GM12878 (cell line): ENCODE measurements at regions of chr9 and their contacts with region 1.

Region 1: DNA sequence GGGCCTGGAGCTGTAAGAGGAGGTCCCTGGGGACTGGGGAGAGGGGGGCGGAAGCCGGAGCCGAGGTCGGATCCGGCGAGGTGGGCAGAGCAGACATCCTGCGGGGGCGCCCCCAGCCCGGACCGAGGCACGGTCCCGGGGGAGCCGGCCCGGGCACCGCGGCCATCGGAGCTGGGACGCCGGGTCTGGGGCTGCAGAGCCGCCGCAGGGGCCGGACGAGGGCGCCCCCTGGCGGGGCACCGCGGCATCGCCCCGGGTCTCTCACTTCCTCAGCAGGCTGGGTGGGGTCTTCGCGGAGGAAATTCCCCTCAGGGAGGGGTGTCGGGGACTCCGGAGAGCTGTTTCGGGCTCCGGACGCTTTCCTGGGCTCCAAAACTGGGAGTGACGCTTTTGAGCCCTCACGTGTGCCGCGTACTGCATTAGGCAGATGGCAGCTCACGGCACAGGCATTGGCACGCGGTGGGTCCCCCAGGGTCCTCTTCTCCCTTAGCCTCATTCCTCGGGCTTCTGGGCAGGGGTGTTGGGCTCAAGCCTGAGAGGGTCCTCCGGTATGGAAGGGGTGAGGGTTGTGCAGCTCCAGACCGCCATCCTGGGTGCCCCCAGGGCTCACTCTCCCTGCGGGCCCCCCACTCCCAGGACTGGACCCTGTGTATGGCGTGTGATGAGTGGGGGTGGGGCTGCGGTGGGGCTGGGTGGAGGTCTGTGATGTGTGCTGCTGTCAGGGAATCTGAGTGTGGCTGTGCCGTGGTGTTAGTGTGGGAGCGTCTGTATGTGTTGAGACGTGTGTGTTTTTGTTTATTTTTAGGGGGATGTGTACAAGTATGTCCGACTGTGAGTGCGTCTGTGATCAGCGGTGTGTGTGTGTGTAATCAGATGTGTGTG is 29.6 kb downstream of the LHX2 start:
- DNase-seq: no peak
- ATAC-seq: peak; percentile 85
- H3K4me3 ChIP-seq: peak overlapping the region; percentile 28; the same call in 1 of the 2 replicates
- H3K27ac ChIP-seq: no peak overlapping the region
- H3K4me1 ChIP-seq: peaks cover 6% of the 10 kb centered on the region
- H3K27me3 ChIP-seq: peaks cover 2 to 6% of the 10 kb centered on the region in 2 experiments
- CTCF ChIP-seq: peak; percentile 87 to 95 (median 90)
- EP300 ChIP-seq: no peak
- POLR2A ChIP-seq: no peak
- RAD21 ChIP-seq: peak; percentile 85

Region 2: DNA sequence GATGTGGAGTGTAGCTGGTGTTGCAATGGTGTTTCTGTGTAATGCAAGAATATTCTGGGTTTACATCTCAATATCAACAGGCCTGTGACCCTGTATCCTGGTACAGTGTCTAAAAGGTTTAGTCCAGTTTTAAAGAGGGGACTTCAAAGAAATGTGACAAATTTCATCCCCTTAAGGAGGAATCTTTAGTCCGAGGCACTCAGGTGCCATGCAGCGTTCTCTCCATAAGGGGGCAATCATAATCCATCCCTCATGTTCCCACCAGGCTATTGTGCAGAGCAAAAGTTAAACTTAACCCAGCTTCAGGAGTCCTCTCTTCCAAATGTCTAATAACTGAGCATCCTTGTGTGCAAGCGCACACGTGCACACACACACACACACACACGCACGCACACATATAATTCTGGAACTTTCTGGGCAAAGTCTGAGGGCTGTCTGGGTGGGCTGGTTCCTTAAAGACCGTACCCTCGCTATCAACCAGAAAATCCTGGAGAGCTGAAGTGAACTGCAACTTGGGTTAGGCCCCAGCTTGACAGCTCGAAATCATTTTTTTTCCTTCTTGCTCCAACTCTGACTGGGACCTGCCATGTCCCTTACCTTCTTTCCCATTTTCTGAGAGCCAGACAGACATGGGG is 639.2 kb before region 1 on chr9:
- CTCF ChIA-PET with region 1: interaction called, 3 read pairs
- POLR2A ChIA-PET with region 1: no interaction called
- RAD21 ChIA-PET with region 1: no interaction called
- SMC1A ChIA-PET with region 1: interaction called, 3 read pairs
- in situ Hi-C with region 1: no loop called
- intact Hi-C with region 1: loop called (anchors 2 kb)
- DNase-seq: no peak
- ATAC-seq: peak; percentile 83
- H3K4me3 ChIP-seq: no peak overlapping the region
- H3K27ac ChIP-seq: no peak overlapping the region
- H3K4me1 ChIP-seq: no peaks in the 10 kb centered on the region
- H3K27me3 ChIP-seq: no peaks in the 10 kb centered on the region
- CTCF ChIP-seq: peak; percentile 55 to 68 (median 62)
- EP300 ChIP-seq: no peak
- POLR2A ChIP-seq: no peak
- RAD21 ChIP-seq: peak; percentile 69

Region 3: GRCh38 chr9:123615381-123615780 is 425.8 kb before region 1 on chr9:
- CTCF ChIA-PET with region 1: interaction called, 8 read pairs
- POLR2A ChIA-PET with region 1: interaction called, 3 read pairs
- RAD21 ChIA-PET with region 1: interaction called, 12 read pairs
- SMC1A ChIA-PET with region 1: interaction called, 3 read pairs
- in situ Hi-C with region 1: no loop called
- intact Hi-C with region 1: no loop called
- DNase-seq: no peak
- ATAC-seq: peak; percentile 53
- H3K4me3 ChIP-seq: no peak overlapping the region
- H3K27ac ChIP-seq: no peak overlapping the region
- H3K4me1 ChIP-seq: 0 out of 2 replicates have a peak, but pooled peaks cover 7% of the 10 kb centered on the region
- H3K27me3 ChIP-seq: no peaks in the 10 kb centered on the region
- CTCF ChIP-seq: peak in 1 of 3 experiments; percentile 14; a peak in 1 of 6 replicates
- EP300 ChIP-seq: no peak
- POLR2A ChIP-seq: no peak
- RAD21 ChIP-seq: no peak

Region 4: GRCh38 chr9:123724211-123724796 is 316.9 kb before region 1 on chr9:
- CTCF ChIA-PET with region 1: interaction called, 38 read pairs
- POLR2A ChIA-PET with region 1: no interaction called
- RAD21 ChIA-PET with region 1: interaction called, 11 read pairs
- SMC1A ChIA-PET with region 1: interaction called, 15 read pairs
- in situ Hi-C with region 1: no loop called
- intact Hi-C with region 1: no loop called
- DNase-seq: no peak
- ATAC-seq: no peak; the same call in 2 of the 3 replicates
- H3K4me3 ChIP-seq: no peak overlapping the region
- H3K27ac ChIP-seq: no peak overlapping the region
- H3K4me1 ChIP-seq: no peaks in the 10 kb centered on the region
- H3K27me3 ChIP-seq: no peaks in the 10 kb centered on the region
- CTCF ChIP-seq: peak in 1 of 3 experiments; percentile 20; a peak in 2 of 6 replicates
- EP300 ChIP-seq: no peak
- POLR2A ChIP-seq: no peak
- RAD21 ChIP-seq: peak; percentile 49; the same call in 1 of the 2 replicates

Region 5: DNA sequence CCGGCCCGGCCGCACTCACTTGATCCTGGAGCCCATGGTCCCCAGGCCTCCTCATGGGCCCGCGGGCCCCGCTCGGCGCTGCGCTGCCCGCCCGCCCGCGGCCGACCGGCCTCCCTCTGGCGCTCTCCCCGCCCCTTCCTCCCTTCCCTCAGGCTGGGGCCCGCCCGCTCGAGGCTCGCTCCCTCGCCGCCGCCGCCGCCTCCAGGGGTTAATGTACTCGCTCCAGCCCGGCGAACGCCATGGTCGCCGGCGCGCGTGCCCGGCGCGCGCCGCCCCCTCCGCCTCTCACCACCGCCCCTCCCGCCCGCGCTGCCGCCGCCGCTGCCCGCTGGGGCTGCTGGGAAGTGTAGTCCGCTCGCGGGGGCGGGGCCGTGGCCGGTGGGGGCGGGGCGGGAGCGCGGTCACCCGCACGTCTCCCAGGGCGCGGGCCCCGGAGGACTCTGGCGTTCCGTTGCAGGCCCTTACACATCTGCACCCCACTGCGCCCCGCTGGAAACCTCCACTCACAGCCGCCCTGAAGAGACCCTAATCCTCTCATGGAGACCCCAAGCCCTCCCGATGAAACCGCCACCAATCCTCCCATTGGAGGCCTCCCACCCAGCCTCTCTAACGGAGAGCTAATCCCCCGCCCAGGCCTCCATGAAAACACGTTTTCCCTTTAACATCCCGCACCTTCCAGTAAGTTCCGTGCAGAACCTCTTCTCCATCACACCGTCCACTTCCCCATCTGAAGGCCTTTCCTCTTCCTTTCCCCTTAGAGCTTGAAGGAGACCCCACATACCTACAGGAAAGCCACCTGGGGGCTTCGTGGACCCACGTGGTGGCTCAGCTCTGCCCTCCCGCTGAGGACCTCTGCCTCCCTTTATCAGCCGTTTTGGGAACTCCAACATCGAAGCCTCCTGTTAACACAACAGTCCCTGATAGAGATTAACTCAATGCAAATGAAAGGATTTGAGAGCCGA is 111.0 kb before region 1 on chr9 and contains the start of gene DENND1A:
- CTCF ChIA-PET with region 1: interaction called, 5 read pairs
- POLR2A ChIA-PET with region 1: no interaction called
- RAD21 ChIA-PET with region 1: interaction called, 15 read pairs
- SMC1A ChIA-PET with region 1: interaction called, 7 read pairs
- in situ Hi-C with region 1: no loop called
- intact Hi-C with region 1: no loop called
- DNase-seq: no peak
- ATAC-seq: peak; percentile 83
- H3K4me3 ChIP-seq: peak within 1 kb of the TSS; percentile 85
- H3K27ac ChIP-seq: peak within 1 kb of the TSS; percentile 79
- H3K4me1 ChIP-seq: peaks cover 18% of the 10 kb centered on the region
- H3K27me3 ChIP-seq: no peaks in the 10 kb centered on the region
- CTCF ChIP-seq: no peak
- EP300 ChIP-seq: no peak
- POLR2A ChIP-seq: peak; percentile 71; the same call in 1 of the 2 replicates
- RAD21 ChIP-seq: no peak
- polyA plus RNA-seq, gene DENND1A: 14.1 to 19.1 TPM

Region 6: GRCh38 chr9:123960366-123960765 is 80.8 kb before region 1 on chr9:
- CTCF ChIA-PET with region 1: interaction called, 161 read pairs
- POLR2A ChIA-PET with region 1: interaction called, 3 read pairs
- RAD21 ChIA-PET with region 1: interaction called, 89 read pairs
- SMC1A ChIA-PET with region 1: interaction called, 90 read pairs
- in situ Hi-C with region 1: no loop called
- intact Hi-C with region 1: loop called (anchors 1 kb)
- DNase-seq: peak; percentile 21
- ATAC-seq: peak; percentile 79
- H3K4me3 ChIP-seq: no peak overlapping the region
- H3K27ac ChIP-seq: no peak overlapping the region
- H3K4me1 ChIP-seq: no peaks in the 10 kb centered on the region
- H3K27me3 ChIP-seq: peaks cover 3 to 4% of the 10 kb centered on the region in 2 experiments; a peak in 3 of 4 replicates
- CTCF ChIP-seq: peak; percentile 35 to 57 (median 48); a peak in 5 of 6 replicates
- EP300 ChIP-seq: no peak
- POLR2A ChIP-seq: no peak
- RAD21 ChIP-seq: peak; percentile 59

Region 7: GRCh38 chr9:124011420-124012301 is 29.5 kb before region 1 on chr9 and contains the start of gene LHX2:
- CTCF ChIA-PET with region 1: interaction called, 11 read pairs
- POLR2A ChIA-PET with region 1: interaction called, 4 read pairs
- RAD21 ChIA-PET with region 1: interaction called, 52 read pairs
- SMC1A ChIA-PET with region 1: interaction called, 55 read pairs
- in situ Hi-C with region 1: no loop called
- intact Hi-C with region 1: no loop called
- DNase-seq: no peak
- ATAC-seq: peak; percentile 71
- H3K4me3 ChIP-seq: peak within 1 kb of the TSS; percentile 51
- H3K27ac ChIP-seq: no peak within 1 kb of the TSS
- H3K4me1 ChIP-seq: peaks cover 25% of the 10 kb centered on the region
- H3K27me3 ChIP-seq: peaks cover 0 to 65% of the 10 kb centered on the region in 2 experiments; a peak in 3 of 4 replicates
- CTCF ChIP-seq: no peak
- EP300 ChIP-seq: no peak
- POLR2A ChIP-seq: no peak
- RAD21 ChIP-seq: no peak
- polyA plus RNA-seq, gene LHX2: 0.82 to 2.6 TPM